ENCODE measurements at regions of chr11 and their contacts with region 1.

Region 1: DNA sequence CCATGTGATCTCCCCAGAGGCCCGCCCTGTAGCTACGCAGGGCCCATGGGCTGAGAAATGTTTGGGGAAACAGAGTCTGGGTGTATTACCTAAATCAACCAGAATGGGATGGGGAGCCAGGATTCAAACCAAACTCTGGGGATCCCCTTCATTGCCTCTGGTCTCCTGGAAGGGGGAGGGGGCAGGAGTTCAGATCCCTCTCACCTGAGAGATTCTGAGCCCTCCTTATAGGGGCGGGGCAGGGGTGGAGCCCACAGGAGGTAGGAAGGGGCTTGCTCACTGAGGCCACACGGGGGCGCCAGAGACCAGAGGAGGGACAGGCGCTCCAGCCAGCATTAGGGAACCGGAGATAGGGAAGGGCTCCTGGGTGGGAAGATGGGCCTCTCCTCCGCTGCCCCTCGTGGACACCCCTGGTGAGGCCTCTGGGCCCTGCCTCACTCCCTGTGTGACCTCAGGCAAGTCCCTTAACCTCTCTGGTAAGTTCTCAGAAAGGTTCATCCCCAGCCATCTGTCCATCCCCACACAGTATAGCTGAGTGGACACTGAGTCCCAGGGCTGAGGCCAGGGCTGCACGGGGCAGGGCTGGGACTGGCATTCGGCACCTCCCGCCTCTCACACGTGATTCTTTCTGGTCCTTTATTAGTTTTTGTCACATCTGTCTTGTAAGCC is 2.7 kb upstream of the CDC42BPG start:
- DNase-seq: peak; percentile 83 to 95
- H3K4me3 ChIP-seq: no peak overlapping the region
- H3K27ac ChIP-seq: no peak overlapping the region
- H3K4me1 ChIP-seq: peaks cover 70% of the 10 kb centered on the region
- H3K27me3 ChIP-seq: no peaks in the 10 kb centered on the region
- CTCF ChIP-seq: peak; percentile 98

Region 2: GRCh38 chr11:64688534-64688982 is 158.6 kb before region 1 on chr11:
- CTCF ChIA-PET with region 1: no interaction called
- POLR2A ChIA-PET with region 1: no interaction called
- intact Hi-C with region 1: loop called (anchors 5 kb)
- DNase-seq: peak; percentile 60 to 89
- H3K4me3 ChIP-seq: peak overlapping the region; percentile 45; the same call in 1 of the 2 replicates
- H3K27ac ChIP-seq: no peak overlapping the region
- H3K4me1 ChIP-seq: no peaks in the 10 kb centered on the region
- H3K27me3 ChIP-seq: peaks cover 54% of the 10 kb centered on the region
- CTCF ChIP-seq: peak; percentile 94

Region 3: DNA sequence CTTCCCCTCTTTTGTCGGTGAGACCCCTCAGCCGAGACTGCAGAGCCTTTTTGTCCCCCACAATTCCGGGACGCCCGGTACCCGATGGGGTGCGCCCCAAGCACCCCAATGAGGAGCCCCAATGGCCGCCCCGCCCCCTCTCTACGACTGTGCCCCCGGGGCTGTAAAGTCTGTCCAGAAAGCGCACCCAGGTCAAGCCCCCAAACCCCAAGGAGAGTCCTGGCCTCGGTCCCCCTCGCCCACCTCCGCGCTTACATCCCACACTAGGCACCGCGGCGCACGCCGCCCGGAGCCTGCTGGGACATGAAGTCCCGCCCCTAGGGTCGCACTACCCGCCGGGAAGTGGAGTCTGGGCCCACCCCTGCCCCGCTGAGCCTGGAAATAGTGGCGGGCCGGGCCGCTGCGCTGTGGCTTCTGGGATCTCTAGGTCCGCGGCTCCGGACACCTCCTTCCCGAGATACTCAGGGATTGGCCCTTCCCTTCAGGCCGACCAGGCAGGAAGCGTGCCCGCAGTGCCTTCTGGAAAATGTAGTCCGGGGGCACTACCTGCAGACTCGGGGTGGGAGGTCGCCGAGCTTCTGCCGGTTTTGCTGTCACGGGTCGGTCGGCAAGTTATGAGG is 36.8 kb before region 1 on chr11 and contains the start of gene MEN1:
- CTCF ChIA-PET with region 1: no interaction called
- POLR2A ChIA-PET with region 1: no interaction called
- intact Hi-C with region 1: loop called (anchors 1 kb)
- DNase-seq: peak; percentile 91 to 98
- H3K4me3 ChIP-seq: peak within 1 kb of the TSS; percentile 93
- H3K27ac ChIP-seq: no peak within 1 kb of the TSS
- H3K4me1 ChIP-seq: peaks cover 6% of the 10 kb centered on the region; the same call in 1 of the 2 replicates
- H3K27me3 ChIP-seq: no peaks in the 10 kb centered on the region
- CTCF ChIP-seq: no peak
- total RNA-seq, gene MEN1: 48.7 and 61.6 TPM in 2 replicates

Region 4: DNA sequence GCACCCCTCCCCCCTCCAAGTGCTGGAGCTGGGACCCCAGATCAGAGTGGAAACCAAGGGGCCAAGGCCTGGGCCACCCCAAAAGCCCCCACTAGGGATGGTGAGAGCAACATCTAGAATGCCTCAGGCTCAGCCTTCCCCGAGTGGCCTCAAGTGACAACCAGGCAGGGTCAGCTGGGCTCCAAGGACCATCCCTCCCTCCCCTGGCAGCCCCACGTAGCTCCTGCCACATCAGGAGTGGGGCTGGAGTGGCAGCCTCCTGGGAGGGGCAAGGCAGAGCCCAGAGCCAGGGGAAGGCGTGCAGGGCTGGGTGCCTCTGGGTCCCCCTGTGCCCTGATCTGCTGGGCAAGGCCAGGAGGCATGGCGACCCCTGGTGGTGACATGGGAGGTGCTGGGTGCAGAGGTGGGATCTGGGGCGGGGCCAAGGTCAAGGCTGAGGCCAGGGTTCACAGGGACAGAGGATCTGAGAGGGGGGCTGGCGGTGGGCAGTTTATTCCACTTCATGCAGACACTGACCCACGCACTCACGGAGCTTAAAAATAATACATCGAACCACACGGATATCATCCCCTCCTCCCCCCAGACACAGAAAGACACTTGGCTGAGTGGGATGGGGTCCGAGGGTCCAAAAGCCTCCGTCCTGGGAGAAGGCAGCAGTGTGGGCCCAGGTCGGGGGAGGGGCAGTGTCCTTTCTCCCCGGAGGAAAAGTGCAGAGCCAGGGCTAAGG is 47.1 kb after region 1 on chr11:
- CTCF ChIA-PET with region 1: interaction called, 9 read pairs
- POLR2A ChIA-PET with region 1: no interaction called
- intact Hi-C with region 1: loop called (anchors 1 kb)
- DNase-seq: peak; percentile 53 to 87
- H3K4me3 ChIP-seq: no peak overlapping the region
- H3K27ac ChIP-seq: no peak overlapping the region
- H3K4me1 ChIP-seq: peaks cover 1% of the 10 kb centered on the region; the same call in 1 of the 2 replicates
- H3K27me3 ChIP-seq: no peaks in the 10 kb centered on the region
- CTCF ChIP-seq: peak; percentile 96

Region 5: DNA sequence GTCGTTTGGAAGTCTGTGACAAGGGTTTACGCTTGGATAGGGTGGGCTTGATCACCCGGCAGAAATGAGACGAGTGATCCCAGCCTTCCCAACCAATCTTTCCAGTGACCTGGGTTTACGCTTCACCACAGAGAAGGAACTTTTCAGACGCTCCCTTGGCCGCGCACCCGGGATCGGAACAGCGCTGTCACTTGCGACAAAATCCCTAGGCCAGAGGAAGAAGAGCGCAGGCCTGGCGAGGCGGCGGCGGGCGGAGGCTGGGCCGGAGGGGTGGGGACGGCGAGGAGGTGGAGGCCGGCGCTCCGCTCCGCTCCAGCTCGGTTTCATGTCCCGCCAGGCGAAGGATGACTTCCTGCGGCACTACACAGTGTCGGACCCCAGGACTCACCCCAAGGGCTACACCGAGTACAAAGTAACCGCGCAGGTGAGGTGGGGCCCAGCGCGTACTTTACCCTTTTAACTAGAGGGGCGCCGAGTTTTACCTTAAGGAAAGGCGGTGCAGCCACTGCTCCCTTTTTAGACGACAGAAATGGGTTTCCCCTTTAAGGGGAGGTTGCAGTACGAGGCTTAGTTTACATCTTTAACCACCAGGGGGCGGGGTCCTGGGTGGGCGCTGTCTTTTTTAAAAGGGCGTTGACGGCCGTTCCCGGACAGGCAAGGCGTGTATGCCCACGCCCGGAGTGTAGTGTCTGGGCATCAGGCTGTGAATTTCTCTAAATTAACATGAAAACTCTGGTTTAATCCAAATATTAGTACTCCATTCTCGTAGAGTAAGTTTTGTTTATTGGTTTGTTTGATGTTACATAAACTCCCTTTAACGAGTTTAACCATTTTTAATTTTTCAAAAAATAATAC is 180.3 kb after region 1 on chr11 and contains the start of gene SNX15:
- CTCF ChIA-PET with region 1: interaction called, 4 read pairs
- POLR2A ChIA-PET with region 1: no interaction called
- intact Hi-C with region 1: loop called (anchors 5 kb)
- DNase-seq: peak; percentile 90 to 95
- H3K4me3 ChIP-seq: peak within 1 kb of the TSS; percentile 64
- H3K27ac ChIP-seq: peak within 1 kb of the TSS; percentile 36
- H3K4me1 ChIP-seq: peaks cover 9% of the 10 kb centered on the region
- H3K27me3 ChIP-seq: no peaks in the 10 kb centered on the region
- CTCF ChIP-seq: peak; percentile 94
- total RNA-seq, gene SNX15: 38.2 and 40.6 TPM in 2 replicates

Region 6: GRCh38 chr11:65251476-65251875 is 404.3 kb after region 1 on chr11:
- CTCF ChIA-PET with region 1: no interaction called
- POLR2A ChIA-PET with region 1: no interaction called
- intact Hi-C with region 1: loop called (anchors 5 kb)
- DNase-seq: peak in 1 of 2 experiments; percentile 50
- H3K4me3 ChIP-seq: no peak overlapping the region
- H3K27ac ChIP-seq: no peak overlapping the region
- H3K4me1 ChIP-seq: no peaks in the 10 kb centered on the region
- H3K27me3 ChIP-seq: no peaks in the 10 kb centered on the region
- CTCF ChIP-seq: no peak; the same call in 1 of the 2 replicates

Measured in PC-9 (cell line).